ENCODE measurements at regions of chr6 and their contacts with region 1.

Region 1: GRCh38 chr6:111709615-111710398 is 104.1 kb upstream of the TRAF3IP2 start:
- DNase-seq: peak; percentile 48
- ATAC-seq: peak; percentile 96
- H3K4me3 ChIP-seq: no peak overlapping the region
- H3K27ac ChIP-seq: no peak overlapping the region
- H3K4me1 ChIP-seq: peaks cover 0 to 5% of the 10 kb centered on the region in 2 experiments; a peak in 2 of 4 replicates
- H3K27me3 ChIP-seq: 0 out of 2 replicates have a peak, but pooled peaks cover 8% of the 10 kb centered on the region
- CTCF ChIP-seq: peak; percentile 47 to 93 (median 81); a peak in 5 of 6 replicates
- POLR2A ChIP-seq: no peak
- RAD21 ChIP-seq: peak; percentile 93

Region 2: GRCh38 chr6:111997078-111997852 is 287.5 kb after region 1 on chr6:
- CTCF ChIA-PET with region 1: interaction called, 10 read pairs
- POLR2A ChIA-PET with region 1: no interaction called
- RAD21 ChIA-PET with region 1: no interaction called
- intact Hi-C with region 1: loop called (anchors 1 kb)
- DNase-seq: peak; percentile 63
- ATAC-seq: peak; percentile 98
- H3K4me3 ChIP-seq: no peak overlapping the region
- H3K27ac ChIP-seq: no peak overlapping the region
- H3K4me1 ChIP-seq: peaks cover 7 to 23% of the 10 kb centered on the region in 2 experiments; a peak in 3 of 4 replicates
- H3K27me3 ChIP-seq: no peaks in the 10 kb centered on the region
- CTCF ChIP-seq: peak; percentile 87 to 94 (median 87)
- POLR2A ChIP-seq: no peak
- RAD21 ChIP-seq: peak; percentile 97

Region 3: DNA sequence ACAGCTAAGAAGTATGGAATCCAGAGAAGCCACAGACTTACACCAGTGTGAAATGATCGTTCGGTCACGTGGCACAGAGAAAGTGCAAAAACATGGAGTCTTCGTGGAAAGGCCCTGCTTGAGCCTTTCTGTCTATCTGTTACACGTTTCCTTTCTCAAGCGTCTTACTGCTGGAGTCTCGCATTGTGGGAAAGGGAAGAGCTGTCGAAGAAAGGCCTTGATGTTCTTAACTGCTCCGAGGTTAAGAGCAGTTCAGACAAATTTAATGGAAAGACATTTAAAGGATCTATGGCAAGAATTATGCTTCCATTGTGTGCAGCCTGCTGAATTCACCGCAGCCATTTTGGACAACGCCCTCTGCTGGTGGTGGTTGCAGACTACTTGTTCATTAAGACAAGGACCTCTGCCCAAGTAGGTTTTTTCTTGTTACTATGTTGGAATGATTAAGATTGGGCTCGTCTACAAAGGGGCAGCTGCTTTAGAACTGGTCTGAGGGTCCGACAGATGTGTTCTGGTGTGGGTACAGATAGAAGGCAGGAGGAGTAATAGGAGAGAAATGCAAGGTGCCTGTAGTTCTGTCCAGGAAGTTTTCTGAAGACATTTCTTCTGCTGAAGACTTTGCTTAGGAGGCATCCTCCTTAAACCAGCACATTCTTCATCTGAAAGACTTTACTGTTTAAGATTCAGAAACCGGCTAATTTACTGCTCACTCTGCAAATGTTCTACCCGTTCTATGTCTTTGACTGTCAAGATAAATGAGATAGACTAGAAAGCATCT is 319.4 kb after region 1 on chr6:
- CTCF ChIA-PET with region 1: interaction called, 6 read pairs
- POLR2A ChIA-PET with region 1: no interaction called
- RAD21 ChIA-PET with region 1: no interaction called
- intact Hi-C with region 1: loop called (anchors 1 kb)
- DNase-seq: peak; percentile 68
- ATAC-seq: peak; percentile 89
- H3K4me3 ChIP-seq: no peak overlapping the region
- H3K27ac ChIP-seq: no peak overlapping the region
- H3K4me1 ChIP-seq: no peaks in the 10 kb centered on the region
- H3K27me3 ChIP-seq: 0 out of 2 replicates have a peak, but pooled peaks cover 4% of the 10 kb centered on the region
- CTCF ChIP-seq: peak; percentile 63 to 91 (median 83); a peak in 5 of 6 replicates
- POLR2A ChIP-seq: no peak
- RAD21 ChIP-seq: peak; percentile 52

Region 4: DNA sequence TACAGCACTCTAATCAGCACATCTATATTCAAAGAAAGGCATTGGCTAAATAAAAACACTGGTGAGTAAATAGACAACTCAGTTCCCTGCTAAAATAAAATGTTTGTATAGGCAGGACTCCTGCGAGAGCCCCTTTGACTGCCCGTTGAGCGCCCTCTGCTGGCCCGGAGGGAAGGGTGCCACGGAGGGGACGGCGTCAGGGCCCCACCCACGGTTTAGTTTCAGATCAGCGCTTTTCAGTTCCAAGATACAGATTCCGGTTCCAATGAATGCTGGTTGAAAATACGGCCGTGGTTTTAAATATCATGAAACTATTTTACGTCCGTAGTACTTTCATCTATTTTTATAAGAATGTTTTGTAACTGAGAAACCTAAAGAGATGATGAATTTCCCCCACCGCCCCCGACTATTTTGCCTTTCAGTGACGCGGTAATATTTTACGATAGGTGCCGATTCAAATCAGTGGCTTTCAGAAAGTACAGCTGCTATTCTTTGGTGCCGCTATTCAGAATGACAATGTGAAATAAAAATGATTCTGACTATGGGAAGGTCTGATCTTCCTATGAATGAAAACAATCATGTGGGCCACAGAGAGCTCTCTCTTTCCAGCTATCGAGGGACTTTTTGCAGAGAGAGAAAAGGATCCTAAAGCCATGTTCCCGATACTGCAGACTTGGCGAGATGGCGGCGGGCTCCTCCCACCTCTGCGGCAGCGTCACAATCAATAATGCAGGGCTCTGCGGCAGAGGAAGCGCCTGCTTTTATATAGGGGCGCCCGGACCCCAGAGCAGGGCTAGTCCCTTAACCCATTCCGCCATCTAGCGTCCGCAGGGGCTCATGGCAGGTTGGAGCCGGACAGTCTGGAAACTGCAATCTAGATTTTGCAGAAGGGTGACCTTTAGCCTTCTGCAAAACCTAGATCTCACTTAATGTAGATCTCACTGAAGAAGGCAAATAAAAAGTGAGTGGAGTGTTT is 333.5 kb after region 1 on chr6:
- CTCF ChIA-PET with region 1: interaction called, 22 read pairs
- POLR2A ChIA-PET with region 1: interaction called, 3 read pairs
- RAD21 ChIA-PET with region 1: interaction called, 3 to 8 read pairs
- intact Hi-C with region 1: loop called (anchors 1 kb)
- DNase-seq: peak; percentile 82
- ATAC-seq: peak; percentile 95
- H3K4me3 ChIP-seq: peak overlapping the region; percentile 61 to 72
- H3K27ac ChIP-seq: peak overlapping the region; percentile 44; the same call in 1 of the 2 replicates
- H3K4me1 ChIP-seq: 0 out of 4 replicates have a peak, but pooled peaks cover 0 to 4% of the 10 kb centered on the region in 2 experiments
- H3K27me3 ChIP-seq: no peaks in the 10 kb centered on the region
- CTCF ChIP-seq: peak; percentile 94 to 98 (median 96)
- POLR2A ChIP-seq: peak; percentile 23
- RAD21 ChIP-seq: peak; percentile 98

Region 5: DNA sequence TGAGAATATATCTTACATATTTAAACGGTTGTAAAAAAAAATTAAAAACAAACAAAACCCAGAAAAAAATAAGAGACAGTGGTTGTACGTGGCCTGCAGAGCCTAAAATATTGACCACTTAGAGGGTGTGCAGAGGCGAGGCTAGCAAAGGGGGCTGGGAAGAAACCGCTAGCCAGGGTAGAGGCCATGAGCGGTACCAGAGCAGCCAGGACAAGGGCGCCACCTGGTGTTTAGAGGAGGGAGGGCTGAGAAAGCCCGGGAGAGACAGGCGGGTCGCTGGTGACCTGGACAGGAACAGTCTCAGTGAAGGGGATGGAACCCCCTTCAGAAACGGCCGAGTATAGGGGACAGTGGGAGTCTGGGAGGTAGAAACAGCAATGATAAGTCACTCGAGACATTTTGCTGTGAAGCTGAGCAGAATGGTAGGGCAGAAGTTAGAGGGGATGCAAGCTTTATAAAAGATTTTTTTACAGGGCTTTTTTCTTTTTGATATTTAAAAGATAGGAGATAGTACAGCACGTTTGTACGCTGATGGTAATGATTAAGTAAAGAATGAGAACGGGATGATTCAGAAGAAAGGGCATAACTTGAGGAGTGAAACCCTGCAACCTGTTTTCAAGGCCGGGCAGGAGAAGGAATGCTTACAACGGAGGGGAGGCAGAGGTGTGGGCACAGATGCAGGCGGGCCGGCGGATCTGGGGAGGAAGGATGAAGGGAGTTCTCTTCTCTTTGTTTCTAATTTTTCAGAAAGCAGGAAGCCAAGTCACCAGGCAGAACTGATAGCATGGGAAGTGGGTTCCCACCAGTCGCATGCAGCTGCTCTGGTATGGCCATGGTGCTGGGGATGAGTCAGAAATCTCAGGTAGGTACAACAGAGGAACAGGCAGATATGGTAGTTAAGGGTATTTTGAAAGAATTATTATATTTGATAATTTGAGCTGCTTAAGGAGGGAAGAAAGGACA is 453.8 kb after region 1 on chr6:
- CTCF ChIA-PET with region 1: interaction called, 13 read pairs
- POLR2A ChIA-PET with region 1: no interaction called
- RAD21 ChIA-PET with region 1: no interaction called
- intact Hi-C with region 1: loop called (anchors 1 kb)
- DNase-seq: peak; percentile 33
- ATAC-seq: peak; percentile 100
- H3K4me3 ChIP-seq: no peak overlapping the region
- H3K27ac ChIP-seq: no peak overlapping the region
- H3K4me1 ChIP-seq: 0 out of 4 replicates have a peak, but pooled peaks cover 0 to 5% of the 10 kb centered on the region in 2 experiments
- H3K27me3 ChIP-seq: no peaks in the 10 kb centered on the region
- CTCF ChIP-seq: peak; percentile 83 to 97 (median 93)
- POLR2A ChIP-seq: no peak
- RAD21 ChIP-seq: peak; percentile 93

Region 6: GRCh38 chr6:112311950-112312547 is 602.2 kb after region 1 on chr6:
- CTCF ChIA-PET with region 1: no interaction called
- POLR2A ChIA-PET with region 1: no interaction called
- RAD21 ChIA-PET with region 1: no interaction called
- intact Hi-C with region 1: loop called (anchors 5 kb)
- DNase-seq: no peak
- ATAC-seq: peak; percentile 53; the same call in 1 of the 2 replicates
- H3K4me3 ChIP-seq: no peak overlapping the region
- H3K27ac ChIP-seq: no peak overlapping the region
- H3K4me1 ChIP-seq: no peaks in the 10 kb centered on the region
- H3K27me3 ChIP-seq: no peaks in the 10 kb centered on the region
- CTCF ChIP-seq: peak; percentile 45 to 85 (median 72)
- POLR2A ChIP-seq: no peak
- RAD21 ChIP-seq: peak; percentile 82